CD4-positive, alpha-beta T cell (primary cell): ENCODE measurements at regions of chr12 and their contacts with region 1.

Region 1: GRCh38 chr12:15899282-15899870 is 11.8 kb upstream of the DERA start:
- DNase-seq: peak in 4 of 14 experiments; percentile 16 to 63 (median 52)
- ATAC-seq: peak; percentile 62
- H3K4me3 ChIP-seq: no peak overlapping the region
- H3K4me3 Mint-ChIP-seq: no peak overlapping the region
- H3K27ac ChIP-seq: no peak overlapping the region
- H3K27ac Mint-ChIP-seq: peak overlapping the region; percentile 32
- H3K4me1 ChIP-seq: no peaks in the 10 kb centered on the region
- H3K4me1 Mint-ChIP-seq: peaks cover 7% of the 10 kb centered on the region
- H3K27me3 ChIP-seq: no peaks in the 10 kb centered on the region
- H3K27me3 Mint-ChIP-seq: no peaks in the 10 kb centered on the region
- CTCF ChIP-seq: peak; percentile 88

Region 2: GRCh38 chr12:15910864-15911721 is 11.7 kb after region 1 on chr12 and contains the start of gene DERA:
- CTCF ChIA-PET with region 1: interaction called, 10 read pairs
- POLR2A ChIA-PET with region 1: interaction called, 18 read pairs
- intact Hi-C with region 1: no loop called
- DNase-seq: peak; percentile 16 to 77 (median 51)
- ATAC-seq: peak; percentile 91
- H3K4me3 ChIP-seq: peak within 1 kb of the TSS; percentile 81
- H3K4me3 Mint-ChIP-seq: peak within 1 kb of the TSS; percentile 89
- H3K27ac ChIP-seq: peak within 1 kb of the TSS; percentile 59 to 64
- H3K27ac Mint-ChIP-seq: peak within 1 kb of the TSS; percentile 77
- H3K4me1 ChIP-seq: peaks cover 4% of the 10 kb centered on the region
- H3K4me1 Mint-ChIP-seq: peaks cover 29% of the 10 kb centered on the region
- H3K27me3 ChIP-seq: no peaks in the 10 kb centered on the region
- H3K27me3 Mint-ChIP-seq: no peaks in the 10 kb centered on the region
- CTCF ChIP-seq: no peak
- total RNA-seq, gene DERA: 6.2 to 7.2 TPM